ENCODE measurements at regions of chr1 and their contacts with region 1.

Region 1: GRCh38 chr1:165914136-165914798 is 86.9 kb downstream of the UCK2 start:
- DNase-seq: peak; percentile 76 to 79
- ATAC-seq: peak; percentile 75 to 85
- H3K4me3 ChIP-seq: no peak overlapping the region
- H3K27ac ChIP-seq: no peak overlapping the region
- H3K4me1 ChIP-seq: peaks cover 8% of the 10 kb centered on the region; the same call in 1 of the 3 replicates
- CTCF ChIP-seq: peak; percentile 93
- EP300 ChIP-seq: no peak
- POLR2A ChIP-seq: no peak
- RAD21 ChIP-seq: peak; percentile 96 to 98

Region 2: GRCh38 chr1:165717918-165718515 is 196.2 kb before region 1 on chr1:
- CTCF ChIA-PET with region 1: interaction called, 24 read pairs
- POLR2A ChIA-PET with region 1: no interaction called
- DNase-seq: peak; percentile 62 to 68
- ATAC-seq: peak; percentile 93 to 95
- H3K4me3 ChIP-seq: no peak overlapping the region
- H3K27ac ChIP-seq: no peak overlapping the region
- H3K4me1 ChIP-seq: no peaks in the 10 kb centered on the region
- CTCF ChIP-seq: peak; percentile 86
- EP300 ChIP-seq: no peak
- POLR2A ChIP-seq: no peak
- RAD21 ChIP-seq: peak; percentile 88 to 96

Region 3: GRCh38 chr1:165738794-165739193 is 175.5 kb before region 1 on chr1:
- CTCF ChIA-PET with region 1: interaction called, 16 read pairs
- POLR2A ChIA-PET with region 1: no interaction called
- DNase-seq: no peak
- ATAC-seq: no peak
- H3K4me3 ChIP-seq: no peak overlapping the region
- H3K27ac ChIP-seq: no peak overlapping the region
- H3K4me1 ChIP-seq: peaks cover 13% of the 10 kb centered on the region; the same call in 2 of the 3 replicates
- CTCF ChIP-seq: no peak
- EP300 ChIP-seq: no peak
- POLR2A ChIP-seq: no peak
- RAD21 ChIP-seq: no peak

Region 4: DNA sequence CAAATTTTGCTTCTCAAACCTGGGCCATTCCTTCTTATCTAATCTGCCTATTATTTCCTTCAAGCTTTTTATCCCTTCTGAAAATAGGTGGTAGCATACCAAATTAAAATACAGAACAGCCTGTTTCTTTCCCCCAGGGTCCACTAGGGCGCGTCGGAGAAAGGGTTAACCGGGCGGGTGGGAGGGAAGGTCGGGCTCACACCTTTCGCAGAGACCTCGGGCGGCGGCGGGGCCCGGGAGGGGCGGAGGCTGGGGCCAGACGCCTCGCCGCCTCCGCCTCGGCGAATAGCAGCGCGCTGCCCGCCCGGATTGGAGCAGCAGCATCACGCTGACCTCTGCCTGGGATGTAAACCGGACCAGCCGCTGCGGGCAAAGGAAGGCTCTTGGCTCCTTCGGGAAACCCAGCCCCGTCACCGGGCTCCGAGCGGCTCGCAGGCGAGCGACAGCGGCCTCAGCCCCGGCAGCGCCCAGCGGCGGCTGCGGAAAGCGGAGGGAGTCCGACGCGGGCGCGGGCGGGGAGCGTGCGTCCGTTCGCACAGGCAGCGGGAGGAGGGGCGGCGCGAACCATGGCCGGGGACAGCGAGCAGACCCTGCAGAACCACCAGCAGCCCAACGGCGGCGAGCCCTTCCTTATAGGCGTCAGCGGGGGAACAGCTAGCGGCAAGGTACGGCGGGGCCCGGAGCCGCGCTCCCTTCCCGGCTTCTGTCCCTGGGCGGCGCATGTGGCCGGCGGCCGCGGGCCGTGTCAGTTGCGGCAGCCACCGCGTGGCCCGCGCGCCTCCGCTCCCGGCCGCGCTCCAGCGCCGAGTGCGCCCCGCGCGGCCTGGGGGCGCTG is 86.8 kb before region 1 on chr1 and contains the start of gene UCK2:
- CTCF ChIA-PET with region 1: interaction called, 28 read pairs
- POLR2A ChIA-PET with region 1: no interaction called
- DNase-seq: peak; percentile 87 to 89
- ATAC-seq: peak; percentile 85 to 94
- H3K4me3 ChIP-seq: peak within 1 kb of the TSS; percentile 86
- H3K27ac ChIP-seq: peak within 1 kb of the TSS; percentile 83 to 94
- H3K4me1 ChIP-seq: peaks cover 16% of the 10 kb centered on the region
- CTCF ChIP-seq: peak; percentile 26; the same call in 1 of the 3 replicates
- EP300 ChIP-seq: no peak
- POLR2A ChIP-seq: peak; percentile 73
- RAD21 ChIP-seq: peak in 1 of 2 experiments; percentile 15; a peak in 1 of 5 replicates
- polyA plus RNA-seq, gene UCK2: 98.9 and 123 TPM in 2 replicates

Region 5: GRCh38 chr1:165884690-165885304 is 29.5 kb before region 1 on chr1:
- CTCF ChIA-PET with region 1: interaction called, 17 read pairs
- POLR2A ChIA-PET with region 1: no interaction called
- DNase-seq: no peak
- ATAC-seq: no peak; a peak in 3 of 6 replicates
- H3K4me3 ChIP-seq: no peak overlapping the region
- H3K27ac ChIP-seq: no peak overlapping the region
- H3K4me1 ChIP-seq: peaks cover 23% of the 10 kb centered on the region
- CTCF ChIP-seq: no peak
- EP300 ChIP-seq: no peak
- POLR2A ChIP-seq: no peak
- RAD21 ChIP-seq: no peak

Region 6: GRCh38 chr1:165898837-165899236 is 15.4 kb before region 1 on chr1:
- CTCF ChIA-PET with region 1: interaction called, 34 read pairs
- POLR2A ChIA-PET with region 1: no interaction called
- DNase-seq: peak in 1 of 2 experiments; percentile 35
- ATAC-seq: peak; percentile 49 to 52; a peak in 5 of 6 replicates
- H3K4me3 ChIP-seq: no peak overlapping the region
- H3K27ac ChIP-seq: peak overlapping the region in 1 of 2 experiments; percentile 34; a peak in 2 of 6 replicates
- H3K4me1 ChIP-seq: peaks cover 20% of the 10 kb centered on the region; the same call in 2 of the 3 replicates
- CTCF ChIP-seq: no peak
- EP300 ChIP-seq: no peak
- POLR2A ChIP-seq: no peak
- RAD21 ChIP-seq: no peak

Region 7: DNA sequence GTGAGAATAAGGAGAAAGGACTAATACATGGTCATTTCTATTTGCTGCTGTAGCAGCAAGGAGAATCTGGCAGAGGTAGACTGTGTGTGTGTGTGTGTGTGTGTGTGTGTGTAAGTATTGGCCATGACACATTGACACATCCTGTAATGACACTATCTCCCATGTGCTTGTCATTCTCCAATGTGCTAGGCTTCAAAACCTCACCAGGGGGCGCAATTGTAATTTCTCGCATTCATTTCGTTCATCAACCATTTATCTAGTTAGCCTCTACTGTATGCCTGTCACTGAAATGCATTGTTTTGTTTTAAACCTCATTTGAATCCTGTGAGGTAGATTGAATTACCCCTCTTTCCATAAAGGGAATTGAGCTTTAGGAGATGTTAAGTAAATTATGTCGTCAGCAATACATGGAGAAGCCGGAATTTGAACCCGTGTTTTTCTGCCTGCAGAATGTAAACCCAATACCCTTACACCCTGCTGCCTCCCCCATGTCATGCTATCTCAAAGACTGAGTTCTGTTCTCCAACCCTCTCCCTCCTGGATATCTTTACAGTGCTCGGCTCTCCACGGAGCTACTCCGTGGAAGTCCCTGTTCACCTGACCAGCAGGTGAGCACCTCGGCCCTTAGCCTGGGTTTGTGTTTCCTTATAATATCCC is 13.9 kb after region 1 on chr1:
- CTCF ChIA-PET with region 1: interaction called, 19 read pairs
- POLR2A ChIA-PET with region 1: no interaction called
- DNase-seq: peak; percentile 60 to 63
- ATAC-seq: peak; percentile 45 to 71; a peak in 4 of 6 replicates
- H3K4me3 ChIP-seq: no peak overlapping the region
- H3K27ac ChIP-seq: no peak overlapping the region
- H3K4me1 ChIP-seq: no peaks in the 10 kb centered on the region
- CTCF ChIP-seq: peak; percentile 63
- EP300 ChIP-seq: no peak
- POLR2A ChIP-seq: no peak
- RAD21 ChIP-seq: peak; percentile 51 to 66